GM10248 (cell line): ENCODE measurements at regions of chr4 and their contacts with region 1.

Region 1: GRCh38 chr4:147866532-147867271 is 134.8 kb downstream of the ARHGAP10 start:
- DNase-seq: peak; percentile 80
- CTCF ChIP-seq: peak; percentile 97

Region 2: GRCh38 chr4:147605499-147605898 is 261.2 kb before region 1 on chr4:
- CTCF ChIA-PET with region 1: interaction called, 124 read pairs
- POLR2A ChIA-PET with region 1: no interaction called
- DNase-seq: no peak
- CTCF ChIP-seq: no peak

Region 3: DNA sequence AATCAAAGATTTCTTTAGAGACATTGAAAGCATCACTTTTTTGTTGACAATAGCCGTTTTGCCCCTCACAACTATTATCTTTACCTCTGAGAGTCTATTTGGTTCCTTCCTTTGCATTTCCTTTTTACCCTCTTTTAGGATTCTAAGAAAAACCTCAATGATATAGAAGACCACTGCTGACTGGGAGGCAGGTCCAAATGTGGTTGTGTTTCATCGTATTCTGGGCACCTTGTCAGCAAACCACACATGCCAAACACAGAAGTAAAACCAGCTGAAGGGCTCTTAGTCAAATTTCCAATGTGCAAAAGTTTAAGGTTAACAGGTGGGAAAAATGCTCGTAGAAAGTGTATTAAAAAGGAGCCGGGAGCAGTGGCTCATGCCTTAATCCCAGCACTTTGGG is 177.6 kb before region 1 on chr4:
- CTCF ChIA-PET with region 1: interaction called, 66 read pairs
- POLR2A ChIA-PET with region 1: no interaction called
- DNase-seq: no peak
- CTCF ChIP-seq: no peak

Region 4: DNA sequence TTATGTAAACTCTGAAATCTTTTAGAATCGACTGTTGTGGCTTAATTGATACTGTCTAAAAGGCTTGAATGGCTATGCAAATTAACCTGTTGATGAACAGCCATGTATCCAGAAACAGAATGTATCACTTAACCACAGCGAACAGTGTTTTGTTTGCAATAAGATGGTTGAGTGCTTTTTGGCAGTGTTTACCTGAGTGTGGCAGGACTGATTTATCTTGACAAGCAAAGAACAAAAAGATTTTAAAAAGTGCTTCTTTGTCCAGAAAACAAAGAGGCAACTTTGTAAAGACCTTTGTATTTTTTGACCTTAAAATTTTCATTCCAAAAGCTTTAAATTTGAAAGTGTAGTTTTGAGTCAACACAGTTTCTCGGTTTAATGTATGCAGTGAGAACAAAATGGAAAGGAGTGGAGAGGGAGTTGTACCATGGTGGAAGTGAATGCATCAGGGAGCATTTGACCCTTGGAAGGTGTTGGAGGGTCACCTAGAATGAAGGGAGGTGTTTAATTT is 116.8 kb before region 1 on chr4:
- CTCF ChIA-PET with region 1: interaction called, 11 read pairs
- POLR2A ChIA-PET with region 1: no interaction called
- DNase-seq: peak; percentile 58
- CTCF ChIP-seq: no peak

Region 5: DNA sequence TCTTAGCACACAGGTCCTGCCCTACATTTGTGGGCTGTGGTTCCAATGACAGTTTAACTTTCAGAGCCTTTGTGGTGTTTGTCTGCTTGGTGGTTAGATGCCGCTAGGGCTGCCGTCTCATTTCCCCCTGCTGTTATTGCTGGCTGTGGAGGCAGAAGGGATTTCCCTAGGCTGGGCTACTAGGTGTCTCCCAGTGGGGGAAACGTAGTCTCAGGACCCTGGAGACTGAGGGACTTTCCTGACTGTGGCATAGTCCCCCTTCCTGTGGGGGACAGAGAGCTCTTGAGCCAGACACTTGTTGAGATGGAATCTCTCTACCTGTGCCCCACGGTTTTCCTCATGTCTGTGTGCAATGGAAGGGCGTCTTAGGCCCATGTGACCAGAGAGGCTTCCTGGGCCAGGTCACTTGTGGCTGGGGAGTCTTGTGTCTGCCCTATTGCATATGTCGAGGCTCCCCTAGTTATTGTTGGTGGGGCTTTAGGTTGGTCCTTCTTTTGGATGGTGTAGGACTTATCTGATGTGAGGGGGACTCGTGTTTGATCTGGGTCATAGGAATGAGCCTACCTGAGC is 66.6 kb before region 1 on chr4:
- CTCF ChIA-PET with region 1: interaction called, 20 read pairs
- POLR2A ChIA-PET with region 1: no interaction called
- DNase-seq: peak; percentile 74
- CTCF ChIP-seq: no peak

Region 6: DNA sequence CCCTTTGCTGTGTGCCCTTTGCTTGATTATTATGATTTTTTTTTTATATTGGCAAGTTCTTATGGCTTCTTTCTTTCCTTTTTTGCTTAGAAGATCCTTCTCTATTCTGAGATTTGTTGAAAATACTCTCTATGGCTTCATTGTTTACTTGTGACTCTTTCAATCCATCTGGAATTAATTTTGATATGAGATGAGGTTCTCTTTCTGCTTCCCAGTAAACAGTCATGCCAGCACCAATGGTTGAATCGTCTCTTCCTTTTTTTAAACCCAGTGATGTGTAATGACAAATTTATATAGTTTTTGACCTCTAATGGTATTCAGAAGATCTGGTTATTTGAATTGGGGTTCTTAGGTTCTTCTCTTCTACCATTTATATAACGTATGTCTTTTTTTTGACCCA is 13.0 kb before region 1 on chr4:
- CTCF ChIA-PET with region 1: interaction called, 210 read pairs
- POLR2A ChIA-PET with region 1: no interaction called
- DNase-seq: no peak
- CTCF ChIP-seq: no peak

Region 7: GRCh38 chr4:148116264-148116663 is 249.6 kb after region 1 on chr4:
- CTCF ChIA-PET with region 1: no interaction called
- POLR2A ChIA-PET with region 1: no interaction called
- DNase-seq: no peak
- CTCF ChIP-seq: no peak